Left colon (tissue), 2 donors: ENCODE measurements at regions of chr11 and their contacts with region 1.

Region 1: DNA sequence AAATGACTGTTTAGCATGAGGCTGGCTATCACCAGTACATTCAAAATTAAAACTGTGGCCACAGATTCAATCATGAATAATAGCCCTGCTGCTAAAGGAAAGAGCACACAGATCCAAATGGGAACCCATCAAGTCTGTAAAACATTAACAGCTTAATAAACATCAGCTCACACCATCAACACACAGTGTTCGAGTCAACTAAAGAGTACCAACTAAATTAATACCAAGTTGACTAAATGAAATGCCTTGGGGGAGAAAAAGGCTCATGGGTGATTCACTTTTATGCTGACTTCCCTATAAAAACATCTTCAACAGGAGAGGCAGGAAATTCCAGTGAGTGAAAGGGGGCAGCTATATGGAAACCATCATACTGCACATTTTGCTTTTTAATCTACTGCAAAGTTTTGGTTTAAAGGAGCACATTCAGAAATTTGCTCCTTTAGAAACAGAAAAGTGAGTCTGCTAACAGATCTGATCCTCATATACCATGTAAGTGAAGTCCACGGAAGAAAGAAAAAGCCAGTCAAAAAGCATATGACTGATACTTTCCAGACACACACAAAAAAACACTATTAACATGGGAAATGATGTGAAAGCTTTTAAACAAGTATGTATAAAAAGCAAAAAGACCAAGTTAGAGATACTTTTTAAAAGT is 16.3 kb downstream of the LGR4 start:
- DNase-seq: no peak
- ATAC-seq: peak; percentile 71

Region 2: GRCh38 chr11:27392278-27393114 is 63.8 kb before region 1 on chr11:
- intact Hi-C with region 1: loop called in 1 of 2 experiments (anchors 10 kb)
- DNase-seq: no peak
- ATAC-seq: no peak